ENCODE measurements at regions of chr3 and their contacts with region 1.

Region 1: GRCh38 chr3:113575206-113575605 is 42.9 kb downstream of the SIDT1 start:
- DNase-seq: no peak
- H3K4me3 ChIP-seq: no peak overlapping the region
- H3K4me3 Mint-ChIP-seq: no peak overlapping the region
- H3K27ac ChIP-seq: no peak overlapping the region
- H3K27ac Mint-ChIP-seq: peak overlapping the region in 4 of 7 donors; percentile 49 to 86 (median 74)
- H3K4me1 ChIP-seq: no peaks in the 10 kb centered on the region
- H3K4me1 Mint-ChIP-seq: peaks cover 7 to 10% (median 8%) of the 10 kb centered on the region in 4 donors
- H3K27me3 ChIP-seq: no peaks in the 10 kb centered on the region
- H3K27me3 Mint-ChIP-seq: no peaks in the 10 kb centered on the region

Region 2: GRCh38 chr3:113051302-113051711 is 523.9 kb before region 1 on chr3:
- CTCF ChIA-PET with region 1: interaction called, 3 read pairs
- POLR2A ChIA-PET with region 1: no interaction called
- intact Hi-C with region 1: loop called (anchors 1 kb)
- DNase-seq: peak; percentile 77 to 84 (median 80)
- H3K4me3 ChIP-seq: no peak overlapping the region
- H3K4me3 Mint-ChIP-seq: no peak overlapping the region
- H3K27ac ChIP-seq: no peak overlapping the region
- H3K27ac Mint-ChIP-seq: no peak overlapping the region
- H3K4me1 ChIP-seq: peaks cover 8% of the 10 kb centered on the region
- H3K4me1 Mint-ChIP-seq: peaks cover 0 to 9% (median 2%) of the 10 kb centered on the region in 4 donors
- H3K27me3 ChIP-seq: no peaks in the 10 kb centered on the region
- H3K27me3 Mint-ChIP-seq: no peaks in the 10 kb centered on the region

Region 3: GRCh38 chr3:113507501-113508067 is 67.6 kb before region 1 on chr3:
- CTCF ChIA-PET with region 1: interaction called, 56 read pairs
- POLR2A ChIA-PET with region 1: no interaction called
- intact Hi-C with region 1: no loop called
- DNase-seq: no peak
- H3K4me3 ChIP-seq: no peak overlapping the region
- H3K4me3 Mint-ChIP-seq: no peak overlapping the region
- H3K27ac ChIP-seq: no peak overlapping the region
- H3K27ac Mint-ChIP-seq: no peak overlapping the region
- H3K4me1 ChIP-seq: no peaks in the 10 kb centered on the region
- H3K4me1 Mint-ChIP-seq: peaks cover 0 to 17% (median 5%) of the 10 kb centered on the region in 4 donors
- H3K27me3 ChIP-seq: no peaks in the 10 kb centered on the region
- H3K27me3 Mint-ChIP-seq: no peaks in the 10 kb centered on the region

Region 4: DNA sequence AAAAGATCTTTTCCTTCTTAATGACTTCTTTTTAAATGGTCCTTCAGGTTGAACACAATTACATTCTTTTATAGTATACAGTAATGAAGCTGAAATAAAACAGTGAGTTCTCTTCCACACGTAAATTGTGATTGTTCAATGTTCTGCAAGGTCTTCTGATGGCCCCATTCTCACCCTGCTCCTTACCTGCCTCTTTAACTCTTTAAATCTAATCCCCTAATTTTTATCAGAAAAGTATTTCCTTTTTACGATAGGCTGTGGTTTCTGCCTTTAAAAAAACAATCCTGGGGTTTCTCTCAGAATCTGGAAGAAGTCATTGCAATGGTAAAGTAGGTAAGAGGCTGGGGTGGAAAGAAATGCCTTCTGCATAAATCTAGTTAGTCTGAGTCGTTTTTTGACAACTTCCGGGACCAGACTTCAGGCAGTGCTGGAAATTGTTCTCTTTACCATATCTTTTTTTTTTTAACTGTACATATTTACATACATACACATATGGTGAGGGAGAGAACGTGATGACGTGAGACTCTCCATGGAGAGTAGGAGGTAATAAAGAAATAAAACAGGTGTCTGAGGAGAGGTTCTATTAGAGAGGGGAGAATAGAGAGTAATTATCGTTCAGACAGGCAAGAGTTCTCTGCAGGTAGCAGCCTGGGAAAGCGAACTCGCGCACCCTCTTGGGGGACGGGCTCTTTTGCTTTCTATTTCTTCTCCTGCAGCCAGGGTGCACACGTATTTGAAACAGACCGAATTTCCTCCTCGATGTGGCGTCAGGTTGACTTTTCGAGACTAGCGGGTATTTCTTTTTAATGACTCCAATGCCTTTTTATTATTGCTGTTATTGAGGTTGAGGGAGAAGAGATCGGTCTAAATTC is 43.1 kb before region 1 on chr3 and contains the start of gene SIDT1:
- CTCF ChIA-PET with region 1: interaction called, 17 read pairs
- POLR2A ChIA-PET with region 1: interaction called, 9 read pairs
- intact Hi-C with region 1: loop called (anchors 1 kb)
- DNase-seq: peak; percentile 77 to 84 (median 80)
- H3K4me3 ChIP-seq: peak within 1 kb of the TSS; percentile 79 to 96
- H3K4me3 Mint-ChIP-seq: peak within 1 kb of the TSS; percentile 97 to 100 (median 99)
- H3K27ac ChIP-seq: peak within 1 kb of the TSS; percentile 90
- H3K27ac Mint-ChIP-seq: peak within 1 kb of the TSS; percentile 95 to 100 (median 100)
- H3K4me1 ChIP-seq: peaks cover 45% of the 10 kb centered on the region
- H3K4me1 Mint-ChIP-seq: peaks cover 36 to 55% (median 45%) of the 10 kb centered on the region in 4 donors
- H3K27me3 ChIP-seq: no peaks in the 10 kb centered on the region
- H3K27me3 Mint-ChIP-seq: no peaks in the 10 kb centered on the region
- total RNA-seq, gene SIDT1: 55.0 to 56.1 TPM

Region 5: GRCh38 chr3:113552851-113553250 is 22.4 kb before region 1 on chr3:
- CTCF ChIA-PET with region 1: interaction called, 43 read pairs
- POLR2A ChIA-PET with region 1: interaction called, 4 read pairs
- intact Hi-C with region 1: no loop called
- DNase-seq: peak; percentile 19 to 40 (median 27)
- H3K4me3 ChIP-seq: no peak overlapping the region
- H3K4me3 Mint-ChIP-seq: no peak overlapping the region
- H3K27ac ChIP-seq: no peak overlapping the region
- H3K27ac Mint-ChIP-seq: peak overlapping the region in 3 of 7 donors; percentile 2 to 77 (median 25)
- H3K4me1 ChIP-seq: peaks cover 15% of the 10 kb centered on the region
- H3K4me1 Mint-ChIP-seq: peaks cover 31 to 63% (median 38%) of the 10 kb centered on the region in 4 donors
- H3K27me3 ChIP-seq: no peaks in the 10 kb centered on the region
- H3K27me3 Mint-ChIP-seq: no peaks in the 10 kb centered on the region

Region 6: GRCh38 chr3:113590983-113591382 is 15.8 kb after region 1 on chr3:
- CTCF ChIA-PET with region 1: interaction called, 28 read pairs
- POLR2A ChIA-PET with region 1: no interaction called
- intact Hi-C with region 1: no loop called
- DNase-seq: no peak
- H3K4me3 ChIP-seq: no peak overlapping the region
- H3K4me3 Mint-ChIP-seq: no peak overlapping the region
- H3K27ac ChIP-seq: no peak overlapping the region
- H3K27ac Mint-ChIP-seq: peak overlapping the region in 3 of 7 donors; percentile 11 to 58 (median 36)
- H3K4me1 ChIP-seq: no peaks in the 10 kb centered on the region
- H3K4me1 Mint-ChIP-seq: peaks cover 0 to 1% (median under 1%) of the 10 kb centered on the region in 4 donors
- H3K27me3 ChIP-seq: no peaks in the 10 kb centered on the region
- H3K27me3 Mint-ChIP-seq: no peaks in the 10 kb centered on the region

Region 7: DNA sequence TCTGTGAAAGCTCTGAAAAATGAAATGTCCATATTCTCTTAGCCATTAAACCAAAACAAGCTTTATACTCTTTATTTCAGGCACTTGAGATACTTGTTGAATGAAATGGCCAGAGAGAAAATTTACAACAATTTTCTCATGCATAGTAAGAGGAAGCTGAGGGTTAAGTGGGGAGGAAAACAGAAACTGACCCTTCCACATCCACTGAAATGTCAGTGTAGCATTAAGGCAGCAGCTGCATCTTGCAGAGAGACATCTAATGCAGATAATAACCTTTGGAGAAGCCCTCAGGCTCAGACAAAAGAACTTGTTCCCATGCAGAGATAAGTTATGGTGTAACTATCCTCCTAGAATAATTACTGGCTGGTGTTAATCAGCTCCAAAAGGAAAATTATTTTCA is 406.6 kb after region 1 on chr3:
- CTCF ChIA-PET with region 1: no interaction called
- POLR2A ChIA-PET with region 1: no interaction called
- intact Hi-C with region 1: no loop called
- DNase-seq: no peak
- H3K4me3 ChIP-seq: no peak overlapping the region
- H3K4me3 Mint-ChIP-seq: no peak overlapping the region
- H3K27ac ChIP-seq: no peak overlapping the region
- H3K27ac Mint-ChIP-seq: no peak overlapping the region
- H3K4me1 ChIP-seq: peaks cover 4% of the 10 kb centered on the region
- H3K4me1 Mint-ChIP-seq: peaks cover 4 to 16% (median 8%) of the 10 kb centered on the region in 4 donors
- H3K27me3 ChIP-seq: no peaks in the 10 kb centered on the region
- H3K27me3 Mint-ChIP-seq: no peaks in the 10 kb centered on the region

Measured in CD4-positive, alpha-beta memory T cell (primary cell).